Naive thymus-derived CD4-positive, alpha-beta T cell (primary cell): ENCODE measurements at regions of chr7 and their contacts with region 1.

Region 1: GRCh38 chr7:106223156-106223555 is 61.6 kb downstream of the NAMPT start:
- DNase-seq: no peak
- ATAC-seq: no peak
- H3K4me3 ChIP-seq: no peak overlapping the region
- H3K4me3 Mint-ChIP-seq: no peak overlapping the region
- H3K27ac ChIP-seq: no peak overlapping the region
- H3K27ac Mint-ChIP-seq: no peak overlapping the region
- H3K4me1 ChIP-seq: no peaks in the 10 kb centered on the region
- H3K4me1 Mint-ChIP-seq: peaks cover 0 to 12% (median 6%) of the 10 kb centered on the region in 7 donors
- H3K27me3 ChIP-seq: no peaks in the 10 kb centered on the region
- H3K27me3 Mint-ChIP-seq: peaks cover 9 to 26% (median 17%) of the 10 kb centered on the region in 5 donors

Region 2: GRCh38 chr7:107530751-107531150 is 1307.6 kb after region 1 on chr7:
- CTCF ChIA-PET with region 1: no interaction called
- POLR2A ChIA-PET with region 1: no interaction called
- intact Hi-C with region 1: loop called in 1 of 2 experiments (anchors 5 kb)
- DNase-seq: no peak
- ATAC-seq: no peak
- H3K4me3 ChIP-seq: no peak overlapping the region
- H3K4me3 Mint-ChIP-seq: no peak overlapping the region
- H3K27ac ChIP-seq: no peak overlapping the region
- H3K27ac Mint-ChIP-seq: no peak overlapping the region
- H3K4me1 ChIP-seq: no peaks in the 10 kb centered on the region
- H3K4me1 Mint-ChIP-seq: peaks cover 21 to 66% (median 50%) of the 10 kb centered on the region in 7 donors
- H3K27me3 ChIP-seq: no peaks in the 10 kb centered on the region
- H3K27me3 Mint-ChIP-seq: no peaks in the 10 kb centered on the region